ENCODE measurements at regions of chr12 and their contacts with region 1.

Region 1: GRCh38 chr12:120194534-120195395 is at the start of gene GCN1:
- DNase-seq: peak; percentile 78
- ATAC-seq: peak; percentile 84
- H3K4me3 ChIP-seq: peak within 1 kb of the TSS; percentile 80 to 88 (median 82)
- H3K27ac ChIP-seq: peak within 1 kb of the TSS; percentile 94
- H3K4me1 ChIP-seq: peaks cover 70% of the 10 kb centered on the region
- H3K27me3 ChIP-seq: no peaks in the 10 kb centered on the region; a peak in 1 of 5 replicates
- CTCF ChIP-seq: no peak; the same call in 1 of the 2 replicates
- EP300 ChIP-seq: no peak; a peak in 1 of 4 replicates
- POLR2A ChIP-seq: peak; percentile 62 to 92
- RAD21 ChIP-seq: peak; percentile 57
- total RNA-seq, gene GCN1: 66.7 and 83.0 TPM in 2 replicates

Region 2: DNA sequence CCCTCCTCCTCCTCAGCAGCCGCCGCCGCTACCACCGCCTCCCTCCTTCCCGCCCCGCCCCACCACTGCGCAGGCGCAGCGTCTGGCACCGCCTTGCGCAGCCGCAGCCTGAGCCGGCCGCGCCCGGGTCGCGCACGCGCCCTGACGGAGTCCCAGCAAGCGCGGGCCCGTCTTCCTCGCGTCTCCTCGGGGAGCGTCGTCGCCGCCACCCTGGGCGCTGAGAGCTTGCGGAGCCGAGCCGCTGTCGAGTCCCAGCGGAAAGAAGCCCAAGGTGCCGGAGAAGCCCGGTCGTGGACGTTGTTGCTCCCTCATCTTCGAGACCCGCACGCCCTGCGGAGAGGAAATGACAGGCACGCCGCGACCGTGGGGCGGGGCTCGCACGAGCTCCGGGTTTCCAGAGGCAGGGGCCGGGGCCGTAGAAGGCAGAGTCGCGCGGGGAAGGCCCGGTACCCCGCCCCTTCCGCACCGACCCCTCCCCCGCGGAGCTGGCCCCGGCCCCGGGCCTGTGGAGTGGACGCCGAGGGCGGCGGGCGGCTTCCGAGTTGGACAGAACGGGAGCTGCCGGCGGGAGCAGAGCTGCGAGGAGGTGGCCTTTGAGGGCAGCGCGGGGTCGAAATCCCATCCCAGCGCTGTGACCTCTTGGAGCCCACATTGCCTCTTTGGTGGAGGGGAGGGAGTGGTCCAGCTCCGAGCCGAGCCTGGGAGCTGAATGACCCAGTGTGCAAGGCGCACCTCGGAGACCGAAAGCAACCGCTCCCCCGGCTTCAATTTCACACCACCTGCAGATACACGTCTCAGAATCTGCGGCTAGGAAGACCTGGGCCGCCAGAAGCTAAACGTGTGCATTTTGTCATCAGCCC is 77.7 kb before region 1 on chr12:
- CTCF ChIA-PET with region 1: no interaction called
- POLR2A ChIA-PET with region 1: interaction called, 92 read pairs
- in situ Hi-C with region 1: no loop called
- intact Hi-C with region 1: loop called (anchors 10 kb)
- DNase-seq: peak; percentile 86
- ATAC-seq: peak; percentile 76
- H3K4me3 ChIP-seq: peak overlapping the region; percentile 70 to 99 (median 93)
- H3K27ac ChIP-seq: peak overlapping the region; percentile 92
- H3K4me1 ChIP-seq: peaks cover 68% of the 10 kb centered on the region
- H3K27me3 ChIP-seq: no peaks in the 10 kb centered on the region; a peak in 1 of 5 replicates
- CTCF ChIP-seq: no peak
- EP300 ChIP-seq: peak in 1 of 2 experiments; percentile 46; a peak in 1 of 4 replicates
- POLR2A ChIP-seq: peak in 1 of 2 experiments; percentile 93; a peak in 2 of 4 replicates
- RAD21 ChIP-seq: no peak; the same call in 1 of the 2 replicates

Region 3: GRCh38 chr12:120181991-120182631 is 12.7 kb before region 1 on chr12:
- CTCF ChIA-PET with region 1: no interaction called
- POLR2A ChIA-PET with region 1: interaction called, 54 read pairs
- in situ Hi-C with region 1: no loop called
- intact Hi-C with region 1: no loop called
- DNase-seq: peak; percentile 63
- ATAC-seq: peak; percentile 89
- H3K4me3 ChIP-seq: no peak overlapping the region
- H3K27ac ChIP-seq: peak overlapping the region; percentile 54
- H3K4me1 ChIP-seq: peaks cover 36% of the 10 kb centered on the region
- H3K27me3 ChIP-seq: no peaks in the 10 kb centered on the region
- CTCF ChIP-seq: no peak
- EP300 ChIP-seq: no peak
- POLR2A ChIP-seq: no peak
- RAD21 ChIP-seq: no peak

Region 4: DNA sequence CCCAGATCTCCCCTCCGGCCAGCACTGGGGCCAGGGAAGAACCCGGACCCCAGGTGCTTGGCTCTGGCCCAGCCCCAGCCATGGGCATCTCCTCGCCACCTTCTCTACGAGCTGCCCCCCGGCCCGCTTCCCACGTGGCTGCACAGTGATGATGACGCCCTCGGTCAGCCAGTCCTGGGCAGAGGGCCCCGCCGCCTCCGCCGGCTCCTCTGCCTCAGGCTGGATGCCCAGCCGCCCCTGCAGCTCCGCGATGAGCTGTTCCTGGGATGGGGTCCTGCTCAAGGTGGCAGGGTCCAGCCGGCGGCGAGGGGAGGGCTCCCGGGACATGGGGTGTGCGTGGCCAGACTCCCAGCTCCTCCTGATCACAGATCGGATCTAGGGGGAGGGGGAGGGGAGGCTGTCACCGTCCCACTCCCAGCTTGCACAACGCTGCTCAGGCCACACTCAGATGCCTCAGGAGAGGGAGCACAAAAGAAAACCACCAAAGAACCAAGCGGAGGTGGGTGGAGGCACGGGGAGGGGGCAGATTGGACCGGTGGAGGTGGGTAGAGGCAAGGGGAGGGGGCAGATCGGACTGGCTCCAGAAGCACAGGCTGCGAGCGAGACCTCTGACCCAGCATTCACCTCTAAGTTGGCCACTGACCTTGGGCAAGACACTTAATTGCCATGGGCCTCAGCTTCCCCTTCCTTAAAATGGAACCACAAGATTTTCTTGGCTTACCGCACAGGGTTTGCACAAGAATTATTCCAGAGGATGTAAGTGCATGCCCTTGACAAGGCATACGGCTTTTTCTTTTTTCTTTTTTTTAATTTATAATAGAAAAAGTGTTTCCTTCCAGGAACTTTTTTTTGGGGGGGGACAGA is 22.2 kb after region 1 on chr12:
- CTCF ChIA-PET with region 1: no interaction called
- POLR2A ChIA-PET with region 1: interaction called, 115 read pairs
- in situ Hi-C with region 1: no loop called
- intact Hi-C with region 1: no loop called
- DNase-seq: no peak
- ATAC-seq: no peak
- H3K4me3 ChIP-seq: no peak overlapping the region
- H3K27ac ChIP-seq: no peak overlapping the region
- H3K4me1 ChIP-seq: peaks cover 40% of the 10 kb centered on the region
- H3K27me3 ChIP-seq: no peaks in the 10 kb centered on the region; a peak in 1 of 5 replicates
- CTCF ChIP-seq: no peak
- EP300 ChIP-seq: no peak
- POLR2A ChIP-seq: 0 out of 4 replicates have a peak, but pooled peaks of 1 of the 2 experiments have one; percentile 23
- RAD21 ChIP-seq: no peak

Region 5: DNA sequence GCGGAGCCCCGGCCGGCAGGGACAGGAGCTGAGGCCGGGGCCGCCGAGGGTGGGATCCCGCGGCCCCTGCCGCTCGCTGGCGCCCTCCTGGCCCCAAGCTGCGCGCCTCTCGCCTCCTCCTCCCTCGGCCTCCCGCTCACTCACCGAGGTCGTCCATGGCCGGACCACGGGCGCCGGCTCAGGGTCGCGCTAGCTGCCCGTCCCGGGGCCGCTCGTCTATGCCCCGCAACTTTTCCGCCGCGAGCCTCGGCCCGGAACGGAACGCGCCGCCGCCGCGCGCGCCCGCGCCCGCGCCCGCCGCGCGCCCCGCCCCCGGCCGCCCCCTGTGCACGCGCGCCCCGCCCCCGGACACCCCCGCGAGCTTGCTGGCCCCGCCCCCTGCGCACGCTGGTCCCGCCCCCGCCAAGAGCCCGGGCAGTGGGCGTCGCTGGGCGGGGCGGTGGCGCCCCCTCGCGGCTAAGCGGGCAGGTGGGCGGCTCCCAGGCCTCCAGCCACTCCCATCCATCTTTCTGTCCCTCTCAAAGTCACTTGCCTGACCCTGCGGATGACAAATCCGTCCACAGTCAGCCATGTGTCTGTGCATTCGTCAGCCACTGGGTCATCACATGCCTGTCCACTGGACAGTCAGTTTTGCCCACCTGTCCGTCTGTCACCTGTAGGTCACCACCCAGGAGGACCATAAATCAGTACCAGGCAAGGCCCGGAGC is 70.9 kb after region 1 on chr12 and contains the start of gene PXN:
- CTCF ChIA-PET with region 1: no interaction called
- POLR2A ChIA-PET with region 1: interaction called, 22 read pairs
- in situ Hi-C with region 1: no loop called
- intact Hi-C with region 1: no loop called
- DNase-seq: peak; percentile 73
- ATAC-seq: peak; percentile 80
- H3K4me3 ChIP-seq: peak within 1 kb of the TSS; percentile 76 to 97 (median 88)
- H3K27ac ChIP-seq: peak within 1 kb of the TSS; percentile 53
- H3K4me1 ChIP-seq: peaks cover 71% of the 10 kb centered on the region
- H3K27me3 ChIP-seq: no peaks in the 10 kb centered on the region
- CTCF ChIP-seq: peak; percentile 85
- EP300 ChIP-seq: peak in 1 of 2 experiments; percentile 41; a peak in 1 of 4 replicates
- POLR2A ChIP-seq: peak; percentile 41 to 66; a peak in 3 of 4 replicates
- RAD21 ChIP-seq: peak; percentile 91
- total RNA-seq, gene PXN: 13.6 and 14.2 TPM in 2 replicates

Measured in HepG2 (cell line).